Heart left ventricle (tissue), 16 donors: ENCODE measurements at regions of chr3 and their contacts with region 1.

Region 1: DNA sequence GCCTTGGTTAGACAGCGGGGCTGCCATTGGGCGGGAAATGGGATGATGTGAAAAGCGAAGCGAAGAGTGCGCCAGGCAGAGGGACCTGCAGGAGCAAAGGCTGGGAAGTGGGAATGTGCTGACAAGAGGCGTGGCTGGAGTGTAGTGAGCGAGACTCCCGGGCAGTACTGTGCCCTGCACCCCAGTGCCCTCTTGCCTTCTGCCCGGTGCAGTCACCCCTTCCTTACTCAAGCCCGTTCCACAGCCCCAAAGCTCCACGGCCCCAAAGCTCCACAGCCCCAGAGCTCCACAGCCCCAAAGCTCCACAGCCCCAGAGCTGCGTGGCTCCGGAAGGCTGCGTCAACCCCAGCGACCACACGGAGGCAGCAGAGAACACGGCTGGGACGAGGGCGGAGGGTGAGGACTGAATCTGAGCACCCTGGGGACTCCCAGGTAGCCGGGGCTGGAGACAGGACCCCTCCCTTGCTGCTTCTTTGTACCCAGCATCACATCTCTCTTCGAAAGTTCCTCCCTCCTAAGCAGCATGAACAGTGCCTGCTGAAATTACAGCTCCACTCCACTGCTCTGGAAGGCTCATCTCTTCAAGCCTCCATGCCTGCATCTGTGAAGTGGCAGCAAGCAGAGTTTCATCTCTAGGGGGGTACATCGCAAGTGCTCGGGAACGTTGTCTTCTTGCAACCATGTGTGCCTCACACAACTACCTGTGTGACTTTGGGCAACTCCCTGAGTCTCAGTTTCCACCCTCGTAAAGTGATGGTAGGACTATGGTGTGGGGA is 108.9 kb downstream of the FBLN2 start:
- DNase-seq: peak in 4 of 5 donors; percentile 40 to 49 (median 42)
- ATAC-seq: peak; percentile 38 to 83 (median 78)
- H3K4me3 ChIP-seq: peak overlapping the region in 1 of 12 donors; percentile 21
- H3K27ac ChIP-seq: no peak overlapping the region
- H3K4me1 ChIP-seq: peaks cover 0 to 16% (median 5%) of the 10 kb centered on the region in 12 donors
- H3K27me3 ChIP-seq: peaks cover 0 to 35% (median 11%) of the 10 kb centered on the region in 9 donors
- CTCF ChIP-seq: peak; percentile 57 to 85 (median 70)
- POLR2A ChIP-seq: no peak

Region 2: GRCh38 chr3:12922306-12922705 is 735.5 kb before region 1 on chr3:
- intact Hi-C with region 1: no loop called
- DNase-seq: no peak
- ATAC-seq: peak in 2 of 4 donors; percentile 16 to 22
- H3K4me3 ChIP-seq: no peak overlapping the region
- H3K27ac ChIP-seq: peak overlapping the region in 6 of 12 donors; percentile 11 to 72 (median 42)
- H3K4me1 ChIP-seq: peaks cover 6 to 67% (median 49%) of the 10 kb centered on the region in 12 donors
- H3K27me3 ChIP-seq: no peaks in the 10 kb centered on the region
- CTCF ChIP-seq: no peak
- POLR2A ChIP-seq: no peak

Region 3: DNA sequence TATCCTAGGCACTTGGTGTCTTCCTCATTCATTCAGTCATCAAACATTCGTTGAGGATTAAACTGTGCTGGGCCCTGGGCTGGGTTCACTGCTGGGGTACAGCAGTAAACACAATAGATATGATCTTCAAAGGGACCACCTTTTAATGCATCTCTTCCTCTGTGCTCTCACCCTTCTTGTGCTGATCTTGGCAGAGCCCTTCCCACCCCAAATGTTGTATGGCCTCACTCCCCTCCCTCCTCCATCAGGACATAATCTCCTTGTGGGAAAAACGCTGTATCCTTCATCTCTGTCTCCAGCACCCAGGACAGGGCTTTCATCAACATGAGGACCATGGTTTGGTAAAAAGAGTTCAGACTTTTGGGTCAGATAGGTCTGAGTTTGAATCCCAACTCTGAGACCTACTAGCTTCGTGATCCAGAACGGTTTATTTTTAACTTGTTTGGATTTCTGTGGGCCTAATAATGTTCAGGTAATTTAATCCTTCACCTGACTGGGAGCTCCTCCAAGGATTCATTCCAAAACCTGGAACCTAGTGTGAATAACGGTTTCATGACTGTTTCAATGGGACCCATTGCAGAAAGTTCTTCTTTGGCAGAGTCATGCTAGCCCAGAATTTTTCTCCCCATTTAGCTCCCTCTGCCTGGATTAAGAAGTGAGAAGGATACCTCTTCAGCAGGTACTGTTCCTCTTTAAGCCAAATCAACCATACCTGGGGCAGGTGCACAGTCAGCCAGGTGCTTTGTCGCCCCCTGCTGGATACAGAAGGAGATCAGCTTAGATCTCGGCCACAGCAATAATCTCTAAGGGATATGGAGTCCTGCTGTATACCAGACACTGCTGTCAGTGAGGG is 227.2 kb after region 1 on chr3:
- intact Hi-C with region 1: loop called (anchors 2 to 5 kb)
- DNase-seq: peak in 1 of 5 donors; percentile 1
- ATAC-seq: no peak
- H3K4me3 ChIP-seq: no peak overlapping the region
- H3K27ac ChIP-seq: no peak overlapping the region
- H3K4me1 ChIP-seq: peaks cover 0 to 9% (median 4%) of the 10 kb centered on the region in 12 donors
- H3K27me3 ChIP-seq: peaks cover 8 to 53% (median 32%) of the 10 kb centered on the region in 9 donors
- CTCF ChIP-seq: peak in 11 of 12 donors; percentile 16 to 65 (median 32)
- POLR2A ChIP-seq: no peak